Heart right ventricle (tissue), 16 donors: ENCODE measurements at regions of chr2 and their contacts with region 1.

Region 1: DNA sequence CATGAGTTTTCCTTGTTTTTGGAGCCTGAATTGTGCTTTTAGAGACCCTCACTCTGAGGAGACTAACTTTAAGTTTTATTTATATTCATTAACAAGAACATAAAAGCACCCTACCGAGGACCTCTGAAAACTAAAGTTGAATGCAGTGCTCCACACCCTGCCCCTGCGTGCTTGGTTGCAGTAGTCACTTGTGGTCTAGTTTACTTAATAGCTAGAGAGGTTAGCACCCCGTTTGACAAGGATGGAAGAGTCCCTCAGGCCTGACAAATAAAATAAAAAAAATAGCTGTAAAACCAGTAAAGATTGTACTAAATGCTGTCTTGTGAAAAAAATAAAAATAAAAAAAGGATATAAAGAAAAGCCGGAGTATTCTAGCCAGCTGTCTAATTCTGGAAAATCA is 395.2 kb downstream of the MTX2 start:
- DNase-seq: no peak
- ATAC-seq: no peak
- H3K4me3 ChIP-seq: no peak overlapping the region
- H3K27ac ChIP-seq: no peak overlapping the region
- H3K4me1 ChIP-seq: peaks cover 0 to 12% (median under 1%) of the 10 kb centered on the region in 9 donors
- H3K27me3 ChIP-seq: peaks cover 0 to 29% (median 21%) of the 10 kb centered on the region in 7 donors
- CTCF ChIP-seq: no peak

Region 2: GRCh38 chr2:176805349-176805748 is 140.9 kb after region 1 on chr2:
- intact Hi-C with region 1: loop called in 3 of 10 experiments (anchors 5 to 10 kb)
- DNase-seq: no peak
- ATAC-seq: no peak
- H3K4me3 ChIP-seq: no peak overlapping the region
- H3K27ac ChIP-seq: no peak overlapping the region
- H3K4me1 ChIP-seq: no peaks in the 10 kb centered on the region
- H3K27me3 ChIP-seq: no peaks in the 10 kb centered on the region
- CTCF ChIP-seq: no peak